PC-3 (cell line): ENCODE measurements at regions of chr7 and their contacts with region 1.

Region 1: GRCh38 chr7:136956232-136956631 is 87.8 kb downstream of the CHRM2 start:
- DNase-seq: peak; percentile 76
- ATAC-seq: peak; percentile 69
- H3K4me3 ChIP-seq: peak overlapping the region; percentile 29; the same call in 1 of the 2 replicates
- H3K27ac ChIP-seq: peak overlapping the region; percentile 74
- H3K4me1 ChIP-seq: peaks cover 47% of the 10 kb centered on the region
- H3K27me3 ChIP-seq: no peaks in the 10 kb centered on the region
- CTCF ChIP-seq: no peak

Region 2: DNA sequence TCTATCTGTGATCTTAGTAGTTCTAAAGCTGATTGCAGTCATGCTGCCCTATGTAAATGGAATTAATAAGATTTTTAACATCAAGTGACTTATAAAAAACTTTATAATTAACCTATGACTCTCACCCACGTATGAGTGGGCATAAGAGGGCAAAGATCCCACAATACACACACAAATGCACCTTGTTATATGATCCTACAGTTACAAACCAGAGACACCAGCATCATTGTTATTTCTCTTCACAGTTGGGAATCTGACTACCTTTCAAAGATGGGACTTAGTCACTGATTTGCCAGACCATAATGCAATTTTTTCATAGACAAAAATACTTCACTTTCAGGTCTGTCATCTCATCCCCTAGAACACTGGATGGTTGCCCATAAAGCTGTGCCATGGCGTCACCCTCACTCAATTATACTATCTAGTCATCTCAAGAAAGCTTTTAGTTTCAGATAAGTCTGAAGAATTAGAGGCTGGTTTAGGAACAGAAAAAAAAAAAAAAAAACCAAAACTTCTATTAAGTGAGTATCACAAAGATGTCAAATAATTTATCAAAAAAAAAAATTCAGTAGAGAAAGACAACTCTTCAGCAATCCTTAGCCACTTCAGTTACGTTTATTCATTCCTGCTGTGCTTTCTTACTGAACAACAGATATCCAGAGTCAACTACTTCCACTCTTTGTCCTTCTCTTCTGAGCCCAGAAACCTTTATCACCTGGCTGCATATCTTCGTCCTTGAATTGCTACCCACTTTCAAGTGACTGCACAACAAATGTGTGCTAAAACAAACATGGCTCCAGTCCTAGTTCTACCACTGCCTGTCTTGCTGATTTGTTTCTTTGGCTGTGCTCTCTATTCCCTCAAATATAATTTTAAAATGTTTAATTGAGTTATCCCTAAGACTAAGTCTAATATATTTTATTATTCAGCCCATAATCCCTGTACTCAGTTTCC is 262.8 kb before region 1 on chr7:
- CTCF ChIA-PET with region 1: no interaction called
- POLR2A ChIA-PET with region 1: no interaction called
- intact Hi-C with region 1: no loop called
- DNase-seq: no peak
- ATAC-seq: no peak
- H3K4me3 ChIP-seq: no peak overlapping the region
- H3K27ac ChIP-seq: no peak overlapping the region
- H3K4me1 ChIP-seq: no peaks in the 10 kb centered on the region
- H3K27me3 ChIP-seq: peaks cover 17% of the 10 kb centered on the region; the same call in 1 of the 2 replicates
- CTCF ChIP-seq: no peak

Region 3: GRCh38 chr7:137001041-137001440 is 44.8 kb after region 1 on chr7:
- CTCF ChIA-PET with region 1: no interaction called
- POLR2A ChIA-PET with region 1: no interaction called
- intact Hi-C with region 1: loop called (anchors 2 kb)
- DNase-seq: no peak
- ATAC-seq: peak; percentile 2; the same call in 1 of the 2 replicates
- H3K4me3 ChIP-seq: no peak overlapping the region
- H3K27ac ChIP-seq: no peak overlapping the region
- H3K4me1 ChIP-seq: peaks cover 46% of the 10 kb centered on the region
- H3K27me3 ChIP-seq: no peaks in the 10 kb centered on the region
- CTCF ChIP-seq: no peak

Region 4: DNA sequence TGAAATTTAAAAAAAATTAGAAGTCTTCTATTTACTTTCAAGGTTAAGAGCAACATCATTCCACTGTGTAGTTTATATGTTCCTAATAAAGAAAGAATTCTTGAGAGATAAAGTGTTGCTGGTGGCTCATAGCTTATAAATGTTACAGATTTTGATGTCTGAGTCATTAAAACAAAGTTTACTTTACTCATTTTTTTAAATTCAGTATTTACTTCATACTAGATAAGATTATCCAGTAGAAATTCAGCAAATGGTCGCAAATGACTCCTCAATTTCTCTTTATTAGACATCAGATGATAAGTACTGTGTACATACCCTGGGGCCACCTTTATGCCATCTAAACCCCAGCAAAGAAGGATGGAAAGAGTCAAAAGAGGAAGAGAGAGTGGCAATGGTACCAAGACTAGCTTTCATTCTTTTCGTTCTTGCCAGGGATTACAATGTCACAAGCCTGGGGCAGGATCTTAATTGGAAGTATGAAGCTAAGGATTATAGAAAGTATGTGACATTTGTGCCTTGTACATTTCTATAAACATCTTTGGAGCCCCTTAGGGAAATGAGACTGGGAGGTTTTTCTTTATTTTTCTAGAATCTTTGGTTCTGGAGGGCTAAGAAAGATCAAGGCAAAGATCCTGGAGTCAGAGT is 118.3 kb after region 1 on chr7:
- CTCF ChIA-PET with region 1: no interaction called
- POLR2A ChIA-PET with region 1: no interaction called
- intact Hi-C with region 1: loop called (anchors 2 kb)
- DNase-seq: peak; percentile 85
- ATAC-seq: peak; percentile 73
- H3K4me3 ChIP-seq: 0 out of 2 replicates have a peak overlapping the region, but pooled peaks have one; percentile 3
- H3K27ac ChIP-seq: peak overlapping the region; percentile 90
- H3K4me1 ChIP-seq: peaks cover 33% of the 10 kb centered on the region
- H3K27me3 ChIP-seq: no peaks in the 10 kb centered on the region
- CTCF ChIP-seq: no peak

Region 5: GRCh38 chr7:137120690-137121089 is 164.5 kb after region 1 on chr7:
- CTCF ChIA-PET with region 1: interaction called, 14 read pairs
- POLR2A ChIA-PET with region 1: no interaction called
- intact Hi-C with region 1: loop called (anchors 5 kb)
- DNase-seq: peak; percentile 81
- ATAC-seq: peak; percentile 94
- H3K4me3 ChIP-seq: no peak overlapping the region
- H3K27ac ChIP-seq: peak overlapping the region; percentile 81
- H3K4me1 ChIP-seq: peaks cover 21% of the 10 kb centered on the region
- H3K27me3 ChIP-seq: no peaks in the 10 kb centered on the region
- CTCF ChIP-seq: no peak

Region 6: DNA sequence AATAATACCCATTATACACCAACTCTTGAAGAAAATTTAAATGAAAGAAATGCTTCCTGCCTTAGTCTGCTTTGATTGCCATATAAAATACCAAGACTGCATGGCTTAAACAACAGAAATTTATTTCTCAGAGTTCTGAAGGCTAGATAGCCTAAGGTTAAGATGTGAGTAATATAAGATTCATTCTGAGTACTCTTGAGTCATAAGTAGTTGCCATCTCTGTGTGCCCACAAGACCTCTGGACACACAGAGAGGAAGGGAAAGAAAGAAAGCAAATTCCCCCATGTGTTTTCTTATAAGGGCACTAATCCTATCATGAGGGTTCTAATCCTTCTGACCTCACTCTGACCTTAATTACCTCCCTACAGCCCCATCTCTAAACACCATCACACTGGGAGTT is 186.1 kb after region 1 on chr7:
- CTCF ChIA-PET with region 1: no interaction called
- POLR2A ChIA-PET with region 1: no interaction called
- intact Hi-C with region 1: loop called (anchors 5 kb)
- DNase-seq: peak; percentile 90
- ATAC-seq: peak; percentile 95
- H3K4me3 ChIP-seq: no peak overlapping the region
- H3K27ac ChIP-seq: peak overlapping the region; percentile 90
- H3K4me1 ChIP-seq: peaks cover 36% of the 10 kb centered on the region
- H3K27me3 ChIP-seq: no peaks in the 10 kb centered on the region
- CTCF ChIP-seq: no peak

Region 7: DNA sequence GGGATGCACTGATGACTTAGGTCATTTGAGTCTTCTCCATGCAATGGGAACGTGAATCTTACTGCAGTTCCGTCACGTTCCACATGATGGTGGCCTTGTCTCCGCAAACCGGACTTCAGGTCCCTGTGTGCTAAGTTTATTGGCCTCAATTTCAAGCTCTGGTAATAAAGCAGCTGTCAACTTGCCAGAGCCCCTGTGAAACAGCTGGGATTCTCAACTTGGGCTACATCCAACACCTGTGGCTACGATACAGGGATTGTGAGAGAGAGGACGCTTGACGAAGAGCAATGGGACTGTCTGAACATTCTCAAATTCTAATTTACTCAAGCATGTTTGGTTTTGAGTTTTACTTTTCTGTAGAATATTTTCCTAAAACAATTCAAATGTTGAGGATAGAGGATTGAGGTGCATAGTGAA is 213.1 kb after region 1 on chr7:
- CTCF ChIA-PET with region 1: no interaction called
- POLR2A ChIA-PET with region 1: no interaction called
- intact Hi-C with region 1: loop called (anchors 5 kb)
- DNase-seq: peak; percentile 68
- ATAC-seq: peak; percentile 75
- H3K4me3 ChIP-seq: no peak overlapping the region
- H3K27ac ChIP-seq: no peak overlapping the region
- H3K4me1 ChIP-seq: no peaks in the 10 kb centered on the region
- H3K27me3 ChIP-seq: no peaks in the 10 kb centered on the region
- CTCF ChIP-seq: peak; percentile 71